CD4-positive, alpha-beta memory T cell (primary cell): ENCODE measurements at regions of chr1 and their contacts with region 1.

Region 1: GRCh38 chr1:201085916-201086735 is 26.1 kb downstream of the CACNA1S start:
- DNase-seq: peak in 4 of 5 donors; percentile 13 to 29 (median 20)
- H3K4me3 ChIP-seq: no peak overlapping the region
- H3K4me3 Mint-ChIP-seq: no peak overlapping the region
- H3K27ac ChIP-seq: no peak overlapping the region
- H3K27ac Mint-ChIP-seq: no peak overlapping the region
- H3K4me1 ChIP-seq: no peaks in the 10 kb centered on the region
- H3K4me1 Mint-ChIP-seq: peaks cover 0 to 1% (median under 1%) of the 10 kb centered on the region in 4 donors
- H3K27me3 ChIP-seq: no peaks in the 10 kb centered on the region
- H3K27me3 Mint-ChIP-seq: peaks cover 6 to 10% of the 10 kb centered on the region in 2 donors

Region 2: GRCh38 chr1:201062495-201063091 is 23.5 kb before region 1 on chr1:
- CTCF ChIA-PET with region 1: no interaction called
- POLR2A ChIA-PET with region 1: no interaction called
- intact Hi-C with region 1: no loop called
- DNase-seq: no peak
- H3K4me3 ChIP-seq: no peak overlapping the region
- H3K4me3 Mint-ChIP-seq: no peak overlapping the region
- H3K27ac ChIP-seq: no peak overlapping the region
- H3K27ac Mint-ChIP-seq: no peak overlapping the region
- H3K4me1 ChIP-seq: no peaks in the 10 kb centered on the region
- H3K4me1 Mint-ChIP-seq: peaks cover 0 to 7% (median 5%) of the 10 kb centered on the region in 4 donors
- H3K27me3 ChIP-seq: no peaks in the 10 kb centered on the region
- H3K27me3 Mint-ChIP-seq: peaks cover 0 to 2% of the 10 kb centered on the region in 2 donors

Region 3: GRCh38 chr1:201119206-201120197 is 33.4 kb after region 1 on chr1:
- CTCF ChIA-PET with region 1: interaction called, 57 read pairs
- POLR2A ChIA-PET with region 1: interaction called, 9 read pairs
- intact Hi-C with region 1: loop called (anchors 1 kb)
- DNase-seq: peak; percentile 35 to 58 (median 42)
- H3K4me3 ChIP-seq: no peak overlapping the region
- H3K4me3 Mint-ChIP-seq: peak overlapping the region in 2 of 8 donors; percentile 5 to 26
- H3K27ac ChIP-seq: no peak overlapping the region
- H3K27ac Mint-ChIP-seq: no peak overlapping the region
- H3K4me1 ChIP-seq: peaks cover 19% of the 10 kb centered on the region
- H3K4me1 Mint-ChIP-seq: peaks cover under 1 to 19% (median 10%) of the 10 kb centered on the region in 4 donors
- H3K27me3 ChIP-seq: peaks cover 4% of the 10 kb centered on the region
- H3K27me3 Mint-ChIP-seq: peaks cover 0 to 7% of the 10 kb centered on the region in 2 donors

Region 4: GRCh38 chr1:201222125-201222524 is 136.0 kb after region 1 on chr1:
- CTCF ChIA-PET with region 1: interaction called, 3 read pairs
- POLR2A ChIA-PET with region 1: no interaction called
- intact Hi-C with region 1: loop called (anchors 2 kb)
- DNase-seq: no peak
- H3K4me3 ChIP-seq: no peak overlapping the region
- H3K4me3 Mint-ChIP-seq: no peak overlapping the region
- H3K27ac ChIP-seq: no peak overlapping the region
- H3K27ac Mint-ChIP-seq: no peak overlapping the region
- H3K4me1 ChIP-seq: no peaks in the 10 kb centered on the region
- H3K4me1 Mint-ChIP-seq: no peaks in the 10 kb centered on the region
- H3K27me3 ChIP-seq: no peaks in the 10 kb centered on the region
- H3K27me3 Mint-ChIP-seq: peaks cover 2 to 3% of the 10 kb centered on the region in 2 donors

Region 5: DNA sequence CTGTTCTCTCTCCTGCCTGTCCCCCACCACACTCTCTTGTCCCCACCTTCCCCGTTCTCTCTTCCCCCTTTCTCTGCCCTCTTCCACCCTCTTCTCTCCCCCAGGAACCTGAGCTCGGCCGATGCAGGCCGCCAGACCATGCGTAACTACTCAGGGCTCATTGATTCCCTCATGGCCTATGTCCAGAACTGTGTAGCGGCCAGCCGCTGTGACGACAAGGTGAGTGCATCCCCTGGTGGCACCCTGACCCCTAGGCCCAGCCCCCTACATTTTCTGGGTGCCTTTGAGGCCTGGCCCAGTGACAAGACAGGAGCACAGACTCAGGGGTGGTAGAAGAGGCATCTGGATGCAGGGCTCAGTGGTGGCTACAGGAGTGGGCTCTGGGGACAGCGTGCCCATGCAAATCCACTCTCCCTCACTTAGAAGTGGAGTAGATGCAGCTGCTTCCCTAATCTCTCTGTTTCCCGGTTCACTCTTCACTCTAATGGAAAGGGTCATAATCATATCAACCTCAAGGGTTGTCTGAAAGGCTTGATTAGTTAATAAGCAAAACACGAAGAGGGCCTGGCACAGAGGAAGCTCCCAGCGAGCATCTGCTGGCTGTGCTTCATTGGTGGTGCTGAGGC is 234.2 kb after region 1 on chr1:
- CTCF ChIA-PET with region 1: no interaction called
- POLR2A ChIA-PET with region 1: no interaction called
- intact Hi-C with region 1: no loop called
- DNase-seq: no peak
- H3K4me3 ChIP-seq: no peak overlapping the region
- H3K4me3 Mint-ChIP-seq: no peak overlapping the region
- H3K27ac ChIP-seq: no peak overlapping the region
- H3K27ac Mint-ChIP-seq: no peak overlapping the region
- H3K4me1 ChIP-seq: no peaks in the 10 kb centered on the region
- H3K4me1 Mint-ChIP-seq: no peaks in the 10 kb centered on the region
- H3K27me3 ChIP-seq: no peaks in the 10 kb centered on the region
- H3K27me3 Mint-ChIP-seq: peaks cover 3 to 5% of the 10 kb centered on the region in 2 donors